ENCODE measurements at regions of chr1 and their contacts with region 1.

Region 1: GRCh38 chr1:24930204-24931145 is at the start of gene RUNX3:
- DNase-seq: peak; percentile 92
- H3K4me3 Mint-ChIP-seq: peak within 1 kb of the TSS; percentile 94
- H3K27ac Mint-ChIP-seq: peak within 1 kb of the TSS; percentile 85
- H3K4me1 Mint-ChIP-seq: peaks cover 67% of the 10 kb centered on the region
- H3K27me3 Mint-ChIP-seq: no peaks in the 10 kb centered on the region
- total RNA-seq, gene RUNX3: 108 to 125 TPM

Region 2: GRCh38 chr1:24946861-24947658 is 16.6 kb after region 1 on chr1:
- CTCF ChIA-PET with region 1: interaction called, 19 read pairs
- POLR2A ChIA-PET with region 1: no interaction called
- DNase-seq: no peak
- H3K4me3 Mint-ChIP-seq: no peak overlapping the region
- H3K27ac Mint-ChIP-seq: peak overlapping the region; percentile 46
- H3K4me1 Mint-ChIP-seq: peaks cover 80% of the 10 kb centered on the region
- H3K27me3 Mint-ChIP-seq: no peaks in the 10 kb centered on the region

Region 3: DNA sequence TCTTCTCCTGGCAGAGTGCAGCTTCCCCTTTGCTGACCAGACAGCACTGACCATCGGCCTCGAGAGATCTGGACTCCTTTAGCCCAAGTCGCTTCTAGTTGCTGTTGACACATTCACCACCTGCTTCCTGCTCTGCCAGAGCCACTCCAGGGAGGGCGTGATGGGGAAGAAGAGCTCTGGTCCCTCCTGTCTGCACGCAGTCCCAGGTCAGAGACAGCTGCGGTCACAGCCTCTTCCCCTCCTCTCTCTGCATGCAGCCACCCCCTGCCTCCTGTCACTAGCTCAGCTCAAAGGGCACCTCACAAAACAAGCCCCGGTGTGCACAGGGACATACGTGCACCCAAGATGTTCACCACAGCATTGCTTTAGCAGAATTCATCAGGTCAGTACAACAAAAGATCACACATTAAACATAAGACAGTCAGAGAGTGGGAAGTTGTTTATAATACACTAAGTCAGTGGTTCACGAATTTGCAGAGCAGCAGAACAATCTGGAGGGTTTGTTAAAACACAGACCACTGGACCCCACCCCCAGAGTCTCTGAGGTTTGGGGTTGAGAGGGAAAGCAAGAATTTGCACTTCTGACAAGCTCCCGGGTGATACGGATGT is 169.0 kb after region 1 on chr1:
- CTCF ChIA-PET with region 1: interaction called, 51 read pairs
- POLR2A ChIA-PET with region 1: no interaction called
- DNase-seq: peak; percentile 61
- H3K4me3 Mint-ChIP-seq: peak overlapping the region; percentile 52
- H3K27ac Mint-ChIP-seq: peak overlapping the region; percentile 89
- H3K4me1 Mint-ChIP-seq: peaks cover 75% of the 10 kb centered on the region
- H3K27me3 Mint-ChIP-seq: peaks cover 9% of the 10 kb centered on the region

Region 4: DNA sequence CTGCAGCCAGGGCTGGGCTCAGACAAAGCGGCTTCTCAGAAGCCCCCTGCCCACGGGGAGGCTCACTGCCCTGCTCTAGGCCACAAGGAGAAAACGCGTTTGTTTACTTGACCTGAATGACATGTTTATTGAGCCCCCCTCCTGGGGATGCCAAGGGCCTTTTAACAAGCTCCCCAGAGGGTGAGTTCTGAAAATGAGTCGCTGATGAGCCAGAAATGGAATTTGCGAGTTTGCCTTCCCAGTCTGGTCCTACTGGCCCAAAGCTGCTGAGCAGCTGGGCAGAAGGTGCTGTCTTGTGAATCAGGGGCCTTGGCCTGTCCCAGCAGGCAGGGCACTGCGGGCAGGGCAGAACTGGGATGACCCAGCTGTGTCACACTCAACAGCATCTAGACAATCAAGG is 181.2 kb after region 1 on chr1:
- CTCF ChIA-PET with region 1: no interaction called
- POLR2A ChIA-PET with region 1: no interaction called
- DNase-seq: no peak
- H3K4me3 Mint-ChIP-seq: no peak overlapping the region
- H3K27ac Mint-ChIP-seq: no peak overlapping the region
- H3K4me1 Mint-ChIP-seq: peaks cover 11% of the 10 kb centered on the region
- H3K27me3 Mint-ChIP-seq: peaks cover 20% of the 10 kb centered on the region